Panc1 (cell line): ENCODE measurements at regions of chr19 and their contacts with region 1.

Region 1: DNA sequence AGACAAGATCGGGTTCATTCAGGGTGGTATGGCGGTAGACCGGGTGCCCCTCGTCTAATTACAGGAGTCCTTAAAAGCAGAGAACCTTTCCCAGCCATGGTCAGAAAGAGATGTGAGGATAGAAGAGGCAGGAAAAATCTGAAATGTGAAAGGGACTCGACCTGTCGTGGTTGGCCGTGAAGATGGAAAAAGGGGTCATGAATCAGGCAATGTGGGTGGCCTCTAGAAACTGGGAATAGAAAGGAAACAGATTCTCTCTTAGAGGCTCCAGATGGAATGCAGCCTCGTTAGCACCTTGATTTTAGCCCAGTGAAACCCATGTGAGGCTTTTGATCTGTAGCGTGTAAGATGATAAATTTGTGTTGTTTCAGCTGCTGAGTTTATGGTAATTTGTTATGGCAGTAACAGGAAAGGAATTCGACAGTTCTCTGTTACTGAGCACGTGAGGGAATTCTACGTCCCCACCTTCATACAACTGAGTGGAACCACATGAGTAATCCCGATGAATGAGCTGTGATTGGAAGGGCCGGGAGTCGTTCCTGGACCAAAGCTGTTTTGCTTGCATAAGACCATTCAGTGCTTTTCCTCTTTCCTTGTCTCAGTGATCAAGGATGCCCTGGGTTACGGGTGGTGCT is 11.0 kb upstream of the CA11 start:
- DNase-seq: no peak
- ATAC-seq: no peak
- H3K4me3 ChIP-seq: no peak overlapping the region
- H3K27ac ChIP-seq: no peak overlapping the region
- H3K4me1 ChIP-seq: no peaks in the 10 kb centered on the region
- H3K27me3 ChIP-seq: no peaks in the 10 kb centered on the region
- CTCF ChIP-seq: no peak

Region 2: DNA sequence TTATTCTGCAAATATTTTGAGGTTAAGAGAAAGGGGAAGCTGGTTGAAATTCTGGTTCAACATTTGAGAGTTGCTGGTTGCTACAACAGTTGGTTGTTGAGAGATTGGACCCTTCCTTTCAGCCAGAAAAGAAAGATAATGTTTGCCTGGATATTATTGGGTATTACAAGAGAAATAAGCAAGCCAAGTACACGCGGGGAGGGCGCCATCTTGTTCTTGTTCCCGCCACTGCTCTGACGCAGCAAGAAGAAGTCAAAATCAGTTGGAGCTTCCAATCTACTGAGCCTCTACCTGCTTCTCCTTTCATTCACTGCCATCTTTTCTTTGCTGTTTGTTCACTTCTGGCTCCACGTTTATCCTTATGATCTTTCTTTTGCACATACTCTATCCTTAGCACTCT is 683.4 kb before region 1 on chr19:
- CTCF ChIA-PET with region 1: no interaction called
- POLR2A ChIA-PET with region 1: interaction called, 13 read pairs
- in situ Hi-C with region 1: no loop called
- intact Hi-C with region 1: no loop called
- DNase-seq: no peak
- ATAC-seq: no peak
- H3K4me3 ChIP-seq: no peak overlapping the region
- H3K27ac ChIP-seq: no peak overlapping the region
- H3K4me1 ChIP-seq: no peaks in the 10 kb centered on the region
- H3K27me3 ChIP-seq: no peaks in the 10 kb centered on the region; the same call in 1 of the 2 replicates
- CTCF ChIP-seq: no peak

Region 3: DNA sequence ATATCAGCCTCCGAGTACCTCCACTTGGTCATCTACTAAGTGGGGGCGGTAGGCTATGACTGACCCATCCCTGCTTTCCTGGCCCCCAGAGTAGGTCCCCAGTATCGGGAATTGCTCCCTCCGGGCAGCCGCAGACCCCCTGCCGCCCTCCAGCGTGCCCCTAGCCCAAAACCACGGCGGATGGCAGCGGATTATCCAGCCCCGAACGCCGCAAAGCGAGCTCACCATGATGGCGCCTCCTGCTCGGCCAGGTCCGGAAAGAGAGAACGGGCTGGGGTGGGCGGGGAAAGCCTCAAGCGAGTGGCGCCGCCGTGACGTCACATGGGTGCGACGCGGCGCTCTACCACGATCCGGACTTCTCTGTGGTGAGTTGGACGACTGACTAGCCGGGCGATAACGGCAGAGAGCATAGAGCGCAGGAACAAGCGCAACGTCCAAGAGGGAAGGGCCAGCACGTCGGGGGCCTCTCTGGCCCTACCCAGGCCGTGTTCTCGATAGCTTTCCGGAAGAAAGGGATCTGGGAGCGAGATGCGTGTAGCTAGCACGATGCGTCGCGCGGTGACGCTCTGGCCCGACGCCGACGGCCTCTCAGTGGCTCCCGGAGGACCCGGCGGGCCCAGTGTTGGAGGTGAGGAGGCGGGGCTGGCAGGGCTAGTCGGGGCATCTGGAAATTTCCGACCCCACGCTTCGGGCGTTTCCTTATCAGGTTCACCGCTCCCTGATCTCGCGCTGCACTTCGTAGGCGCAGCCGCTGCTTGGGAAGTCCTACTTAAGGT is 37.9 kb before region 1 on chr19 and contains the starts of genes RPL18 and SPHK2:
- CTCF ChIA-PET with region 1: no interaction called
- POLR2A ChIA-PET with region 1: no interaction called
- in situ Hi-C with region 1: no loop called
- intact Hi-C with region 1: no loop called
- DNase-seq: peak; percentile 88
- ATAC-seq: peak; percentile 91
- H3K4me3 ChIP-seq: peak within 1 kb of the TSS; percentile 96 to 99
- H3K27ac ChIP-seq: peak within 1 kb of the TSS; percentile 98
- H3K4me1 ChIP-seq: peaks cover 42% of the 10 kb centered on the region
- H3K27me3 ChIP-seq: no peaks in the 10 kb centered on the region
- CTCF ChIP-seq: no peak
- total RNA-seq, gene RPL18: 670 TPM
- total RNA-seq, gene SPHK2: 19.5 TPM

Region 4: DNA sequence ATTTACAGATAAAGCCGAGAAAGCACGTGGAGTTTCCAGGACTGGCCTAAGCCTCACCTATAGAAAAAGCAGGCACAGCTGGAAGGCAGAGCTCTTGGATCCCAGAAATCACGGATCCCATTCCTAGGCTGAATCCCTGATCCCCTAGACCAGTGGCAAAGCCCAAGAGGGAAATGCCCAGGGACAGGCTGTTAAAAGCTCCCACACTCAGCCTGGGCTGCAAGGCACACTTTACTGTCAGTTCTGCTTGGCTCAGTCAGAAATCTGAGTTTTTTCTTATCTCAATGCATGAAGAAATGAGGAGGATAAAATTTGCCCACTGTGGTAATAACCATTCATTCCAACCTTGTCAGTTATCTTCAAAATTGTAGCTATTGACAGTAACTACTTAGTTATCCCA is 30.8 kb after region 1 on chr19:
- CTCF ChIA-PET with region 1: no interaction called
- POLR2A ChIA-PET with region 1: interaction called, 11 read pairs
- in situ Hi-C with region 1: no loop called
- intact Hi-C with region 1: no loop called
- DNase-seq: no peak
- ATAC-seq: no peak
- H3K4me3 ChIP-seq: no peak overlapping the region
- H3K27ac ChIP-seq: no peak overlapping the region
- H3K4me1 ChIP-seq: no peaks in the 10 kb centered on the region
- H3K27me3 ChIP-seq: no peaks in the 10 kb centered on the region
- CTCF ChIP-seq: no peak